B cell (primary cell): ENCODE measurements at regions of chr1 and their contacts with region 1.

Region 1: GRCh38 chr1:23878668-23879067 is 10.6 kb upstream of the FUCA1 start:
- DNase-seq: no peak
- ATAC-seq: no peak
- H3K4me3 ChIP-seq: no peak overlapping the region
- H3K4me3 Mint-ChIP-seq: no peak overlapping the region
- H3K27ac ChIP-seq: no peak overlapping the region
- H3K27ac Mint-ChIP-seq: peak overlapping the region; percentile 26
- H3K4me1 ChIP-seq: no peaks in the 10 kb centered on the region
- H3K4me1 Mint-ChIP-seq: peaks cover 11% of the 10 kb centered on the region
- H3K27me3 ChIP-seq: no peaks in the 10 kb centered on the region
- H3K27me3 Mint-ChIP-seq: no peaks in the 10 kb centered on the region
- CTCF ChIP-seq: no peak

Region 2: DNA sequence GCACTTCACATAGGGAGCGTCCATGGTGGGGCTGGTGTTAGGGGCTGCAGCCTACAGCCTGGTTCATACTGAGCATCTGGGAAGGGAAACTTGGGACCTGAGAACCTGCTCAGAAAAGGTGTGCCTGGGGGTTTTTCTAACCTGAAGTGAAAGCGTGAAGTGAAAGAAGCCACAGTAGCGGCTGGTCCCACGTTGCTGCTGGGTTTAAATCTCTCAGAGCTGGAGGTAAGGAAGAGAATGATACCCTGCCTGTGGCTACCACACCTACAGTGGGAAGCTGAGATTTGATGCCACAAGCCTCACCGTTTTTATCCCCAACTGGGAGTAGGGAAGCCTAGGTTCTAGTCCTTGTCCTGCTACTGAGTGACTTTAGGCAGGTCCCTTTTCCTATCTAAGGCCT is 10.4 kb after region 1 on chr1:
- CTCF ChIA-PET with region 1: no interaction called
- POLR2A ChIA-PET with region 1: no interaction called
- intact Hi-C with region 1: no loop called
- DNase-seq: peak; percentile 78
- ATAC-seq: peak; percentile 62
- H3K4me3 ChIP-seq: peak overlapping the region in 1 of 5 experiments; percentile 60
- H3K4me3 Mint-ChIP-seq: peak overlapping the region; percentile 81
- H3K27ac ChIP-seq: peak overlapping the region; percentile 70 to 82
- H3K27ac Mint-ChIP-seq: peak overlapping the region; percentile 88
- H3K4me1 ChIP-seq: peaks cover 68 to 74% of the 10 kb centered on the region in 2 donors
- H3K4me1 Mint-ChIP-seq: peaks cover 72% of the 10 kb centered on the region
- H3K27me3 ChIP-seq: no peaks in the 10 kb centered on the region
- H3K27me3 Mint-ChIP-seq: no peaks in the 10 kb centered on the region
- CTCF ChIP-seq: no peak

Region 3: DNA sequence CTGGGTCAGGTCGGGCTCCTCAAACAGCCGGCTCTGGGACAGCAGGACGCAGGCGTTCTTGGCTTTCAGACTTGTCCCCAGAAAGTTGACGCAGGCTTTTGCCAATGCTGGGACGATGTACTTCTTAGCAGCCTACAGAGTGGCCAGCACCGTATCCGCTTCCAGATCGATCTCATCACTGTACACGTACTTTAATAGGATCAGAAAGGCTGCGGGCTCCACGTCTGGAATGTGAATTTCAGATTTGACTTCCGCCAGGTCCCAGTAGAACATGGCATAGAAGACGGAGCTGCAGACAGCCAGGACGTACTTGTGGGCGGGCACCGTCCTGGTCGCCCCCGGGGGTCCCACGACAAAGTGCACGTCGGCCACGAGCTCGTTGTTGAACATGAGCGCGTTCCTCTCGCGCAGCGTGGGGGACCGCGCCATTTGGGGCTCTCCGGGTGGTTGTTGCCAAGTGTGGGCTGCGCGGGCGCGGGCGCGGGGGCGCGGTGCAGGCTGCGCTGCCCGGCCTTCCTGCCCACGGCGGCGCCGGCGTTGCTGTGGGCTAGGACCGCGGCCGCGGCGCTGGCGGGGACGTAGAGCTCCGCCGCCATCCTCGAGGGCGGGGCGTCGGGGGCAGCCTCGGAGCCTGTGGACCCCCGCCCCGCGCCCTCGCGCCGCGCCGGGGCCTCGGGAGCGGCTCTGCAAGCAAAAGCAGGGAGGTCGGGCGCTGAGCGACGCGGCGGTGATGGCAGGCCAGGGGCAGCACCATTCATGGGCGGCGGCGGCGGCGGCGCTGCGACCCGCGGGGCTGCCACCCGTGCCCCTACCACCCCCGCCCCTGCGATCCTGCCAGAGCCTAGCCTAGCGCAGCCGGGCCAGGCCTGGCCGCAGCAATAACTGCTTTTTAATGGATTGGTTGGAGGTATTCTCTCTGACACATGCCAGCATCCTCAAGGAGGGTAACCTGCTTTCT is 23.9 kb after region 1 on chr1:
- CTCF ChIA-PET with region 1: interaction called, 3 read pairs
- POLR2A ChIA-PET with region 1: interaction called, 13 read pairs
- intact Hi-C with region 1: no loop called
- DNase-seq: no peak
- ATAC-seq: peak; percentile 26
- H3K4me3 ChIP-seq: peak overlapping the region in 2 of 5 experiments; percentile 22 to 27
- H3K4me3 Mint-ChIP-seq: peak overlapping the region; percentile 61
- H3K27ac ChIP-seq: peak overlapping the region in 1 of 2 donors; percentile 43
- H3K27ac Mint-ChIP-seq: peak overlapping the region; percentile 73
- H3K4me1 ChIP-seq: peaks cover 77 to 86% of the 10 kb centered on the region in 2 donors
- H3K4me1 Mint-ChIP-seq: peaks cover 74% of the 10 kb centered on the region
- H3K27me3 ChIP-seq: no peaks in the 10 kb centered on the region
- H3K27me3 Mint-ChIP-seq: no peaks in the 10 kb centered on the region
- CTCF ChIP-seq: no peak